ENCODE measurements at regions of chr9 and their contacts with region 1.

Region 1: GRCh38 chr9:73683862-73684591 is 532.4 kb downstream of the ANXA1 start:
- DNase-seq: peak in 2 of 9 experiments; percentile 7 to 12
- ATAC-seq: no peak
- H3K4me3 ChIP-seq: no peak overlapping the region
- H3K4me3 Mint-ChIP-seq: no peak overlapping the region
- H3K27ac ChIP-seq: no peak overlapping the region
- H3K27ac Mint-ChIP-seq: no peak overlapping the region
- H3K4me1 ChIP-seq: no peaks in the 10 kb centered on the region
- H3K4me1 Mint-ChIP-seq: no peaks in the 10 kb centered on the region
- H3K27me3 ChIP-seq: no peaks in the 10 kb centered on the region
- H3K27me3 Mint-ChIP-seq: no peaks in the 10 kb centered on the region
- CTCF ChIP-seq: no peak

Region 2: DNA sequence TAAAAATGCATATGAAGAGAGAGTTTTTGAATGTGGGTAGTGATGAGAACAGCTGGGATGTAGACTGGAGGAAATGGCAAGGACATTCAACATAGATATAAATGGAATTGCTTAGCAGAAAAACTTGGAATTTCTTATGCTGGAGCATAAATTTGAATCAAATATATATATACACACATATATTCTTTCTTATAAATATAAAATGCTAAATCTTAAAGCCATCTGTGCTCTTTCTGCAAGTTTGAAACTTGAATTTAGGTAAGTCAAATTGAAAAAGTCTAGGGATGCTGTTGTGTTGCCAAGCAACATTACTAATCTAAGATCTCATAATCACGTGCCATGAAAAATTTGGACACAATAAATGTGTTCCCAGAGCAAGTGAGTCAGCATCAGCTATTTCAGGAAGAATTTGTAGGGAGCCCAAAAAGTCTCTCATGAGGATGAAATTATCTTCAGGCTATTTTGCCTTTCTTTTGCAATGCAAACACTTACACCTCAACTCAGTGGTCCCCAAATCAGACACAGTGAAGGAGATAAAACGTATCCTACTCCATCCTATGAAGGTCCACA is 672.8 kb before region 1 on chr9:
- CTCF ChIA-PET with region 1: no interaction called
- POLR2A ChIA-PET with region 1: no interaction called
- intact Hi-C with region 1: loop called in 1 of 2 experiments (anchors 10 kb)
- DNase-seq: no peak
- ATAC-seq: no peak
- H3K4me3 ChIP-seq: no peak overlapping the region
- H3K4me3 Mint-ChIP-seq: no peak overlapping the region
- H3K27ac ChIP-seq: no peak overlapping the region
- H3K27ac Mint-ChIP-seq: no peak overlapping the region
- H3K4me1 ChIP-seq: no peaks in the 10 kb centered on the region
- H3K4me1 Mint-ChIP-seq: no peaks in the 10 kb centered on the region
- H3K27me3 ChIP-seq: no peaks in the 10 kb centered on the region
- H3K27me3 Mint-ChIP-seq: peaks cover 21% of the 10 kb centered on the region
- CTCF ChIP-seq: no peak

Measured in CD8-positive, alpha-beta T cell (primary cell).